Esophagus muscularis mucosa (tissue), 4 donors: ENCODE measurements at regions of chr16 and their contacts with region 1.

Region 1: DNA sequence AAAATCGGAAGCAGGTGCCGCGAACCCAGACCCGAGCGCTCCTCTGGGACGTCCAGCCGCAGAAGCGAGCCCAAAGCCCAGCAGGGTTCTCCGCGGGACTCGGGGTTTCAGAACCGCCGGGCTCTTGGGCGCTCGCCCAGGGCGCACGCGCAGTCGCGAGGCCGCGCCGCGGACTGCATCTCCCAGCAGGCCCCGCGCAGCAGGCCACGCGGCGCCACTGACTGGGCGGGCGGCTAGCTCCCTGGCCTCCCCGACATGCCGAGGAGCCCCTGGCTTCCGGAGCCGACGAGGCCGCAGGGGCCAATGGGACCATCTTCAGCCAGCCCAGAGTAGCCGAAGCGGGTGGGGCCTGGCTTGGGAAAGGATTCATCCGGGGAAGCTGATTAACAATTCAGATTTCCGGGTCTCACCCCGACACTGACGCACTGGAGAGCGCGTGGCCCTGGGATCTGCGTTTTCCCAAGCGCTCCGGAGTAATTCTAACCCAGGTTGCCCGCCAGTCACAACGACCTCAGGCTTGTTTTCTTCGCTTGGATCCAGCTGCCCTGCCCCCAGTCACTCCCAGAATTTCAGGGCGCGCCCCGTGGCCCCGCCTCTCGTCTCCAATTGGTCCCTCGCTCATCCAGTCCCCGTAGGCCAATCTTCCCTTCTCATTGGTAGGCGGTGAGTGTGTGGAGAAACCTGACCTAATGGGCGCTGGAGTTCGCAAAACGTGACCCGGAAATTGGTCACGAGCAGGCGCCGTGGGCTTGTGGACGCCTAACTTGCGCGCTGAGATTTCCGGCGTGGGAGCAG is at the start of gene ZNF263:
- DNase-seq: peak; percentile 99
- H3K4me3 ChIP-seq: peak within 1 kb of the TSS; percentile 80 to 100 (median 99)
- H3K27ac ChIP-seq: peak within 1 kb of the TSS; percentile 95 to 100 (median 98)
- H3K4me1 ChIP-seq: peaks cover 21 to 36% (median 35%) of the 10 kb centered on the region in 4 donors
- H3K27me3 ChIP-seq: no peaks in the 10 kb centered on the region
- CTCF ChIP-seq: peak in 1 of 3 experiments; percentile 6
- EP300 ChIP-seq: no peak
- POLR2A ChIP-seq: peak; percentile 66
- total RNA-seq, gene ZNF263: 31.1 to 54.3 (median 42.8) TPM

Region 2: DNA sequence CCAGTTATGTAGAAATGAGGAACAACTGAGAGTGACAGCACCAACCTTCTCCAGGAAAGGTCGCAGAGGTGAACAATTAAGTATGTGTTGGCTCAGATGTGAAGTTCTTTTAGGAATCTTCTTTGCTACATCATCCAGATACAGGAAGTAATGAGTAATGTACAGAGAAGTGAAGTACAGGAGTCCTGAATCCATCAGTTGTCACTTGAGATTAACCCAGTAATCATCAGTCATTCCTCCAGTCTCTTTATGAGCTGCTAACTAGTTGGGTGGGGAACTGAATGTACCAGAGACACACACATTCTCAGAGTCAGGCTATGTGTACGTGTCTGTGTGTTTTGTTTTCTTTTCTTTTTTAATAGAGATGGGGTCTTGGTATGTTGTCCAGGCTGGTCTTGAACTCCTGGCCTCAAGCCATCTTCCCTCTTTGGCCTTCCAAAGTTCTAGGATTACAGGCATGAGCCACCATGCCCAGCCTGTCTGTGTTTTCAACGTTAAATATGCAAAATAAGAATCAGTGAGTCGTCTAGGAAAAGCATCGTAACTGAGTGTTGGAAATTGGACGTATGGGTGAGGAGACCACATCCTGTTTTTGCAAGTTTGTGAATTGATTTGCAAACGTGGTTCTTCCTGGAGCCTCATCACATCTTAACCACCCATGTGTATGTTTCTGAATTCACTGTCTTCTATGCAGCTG is 67.9 kb before region 1 on chr16:
- intact Hi-C with region 1: no loop called
- DNase-seq: no peak
- H3K4me3 ChIP-seq: no peak overlapping the region
- H3K27ac ChIP-seq: no peak overlapping the region
- H3K4me1 ChIP-seq: no peaks in the 10 kb centered on the region
- H3K27me3 ChIP-seq: peaks cover 0 to 13% (median 0%) of the 10 kb centered on the region in 4 donors
- CTCF ChIP-seq: no peak
- EP300 ChIP-seq: no peak
- POLR2A ChIP-seq: no peak

Region 3: DNA sequence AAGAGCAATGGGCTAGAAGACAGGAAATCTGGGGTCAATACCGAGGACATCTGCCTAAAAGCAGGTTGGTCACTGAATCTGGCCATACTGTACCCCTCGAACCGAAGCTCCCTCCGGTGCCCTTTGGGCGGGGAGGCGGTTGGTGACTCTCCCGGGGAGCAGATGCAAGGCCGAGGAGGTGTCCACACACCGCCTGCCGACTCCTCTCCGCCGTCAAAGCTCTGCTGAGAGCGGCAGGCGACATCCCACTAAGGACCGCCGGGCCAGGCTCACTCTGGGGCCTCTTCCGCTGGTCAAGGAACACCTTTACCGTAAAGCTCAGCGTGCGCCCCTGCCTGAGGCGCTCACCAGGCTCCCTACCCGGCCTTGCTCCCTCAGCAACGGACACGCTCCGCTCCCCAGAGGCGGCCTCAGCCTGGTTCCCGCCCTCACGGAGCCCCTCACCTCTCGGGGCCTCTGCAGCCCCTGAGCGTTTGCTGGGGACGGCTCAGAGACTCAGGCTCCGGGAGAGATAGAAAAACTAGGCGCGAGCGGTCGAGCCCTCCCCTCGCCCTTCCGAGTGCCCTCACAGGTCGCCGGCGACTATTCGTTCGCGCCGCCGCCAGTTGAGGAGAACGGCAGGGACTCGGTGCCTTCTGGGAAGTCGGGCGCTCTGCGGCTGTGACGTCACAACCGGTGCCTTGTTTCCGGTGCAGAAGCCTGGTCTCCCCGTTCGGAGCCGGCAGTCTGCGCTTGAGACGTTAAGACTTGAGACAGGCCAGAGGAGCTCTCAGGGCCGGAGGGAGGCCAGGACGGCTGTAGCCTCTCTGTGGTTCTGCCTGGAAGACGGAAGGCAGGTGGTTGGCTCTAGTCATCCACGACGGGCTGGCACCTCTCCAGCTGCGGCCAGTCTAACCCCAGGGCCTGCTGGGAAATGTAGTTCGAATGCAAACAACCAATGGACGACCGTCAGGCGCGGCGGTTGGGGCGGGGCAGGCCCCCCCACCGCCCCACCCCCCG is 48.1 kb before region 1 on chr16 and contains the start of gene ZNF200:
- intact Hi-C with region 1: loop called (anchors 5 kb)
- DNase-seq: peak; percentile 99
- H3K4me3 ChIP-seq: peak within 1 kb of the TSS; percentile 69 to 99 (median 88)
- H3K27ac ChIP-seq: peak within 1 kb of the TSS; percentile 95 to 98 (median 96)
- H3K4me1 ChIP-seq: peaks cover 14 to 23% (median 16%) of the 10 kb centered on the region in 4 donors
- H3K27me3 ChIP-seq: peaks cover 0 to 3% (median 0%) of the 10 kb centered on the region in 4 donors
- CTCF ChIP-seq: no peak
- EP300 ChIP-seq: no peak
- POLR2A ChIP-seq: peak; percentile 22
- total RNA-seq, gene ZNF200: 5.8 to 8.2 (median 7.1) TPM